IMR-90 (cell line): ENCODE measurements at regions of chr7 and their contacts with region 1.

Region 1: DNA sequence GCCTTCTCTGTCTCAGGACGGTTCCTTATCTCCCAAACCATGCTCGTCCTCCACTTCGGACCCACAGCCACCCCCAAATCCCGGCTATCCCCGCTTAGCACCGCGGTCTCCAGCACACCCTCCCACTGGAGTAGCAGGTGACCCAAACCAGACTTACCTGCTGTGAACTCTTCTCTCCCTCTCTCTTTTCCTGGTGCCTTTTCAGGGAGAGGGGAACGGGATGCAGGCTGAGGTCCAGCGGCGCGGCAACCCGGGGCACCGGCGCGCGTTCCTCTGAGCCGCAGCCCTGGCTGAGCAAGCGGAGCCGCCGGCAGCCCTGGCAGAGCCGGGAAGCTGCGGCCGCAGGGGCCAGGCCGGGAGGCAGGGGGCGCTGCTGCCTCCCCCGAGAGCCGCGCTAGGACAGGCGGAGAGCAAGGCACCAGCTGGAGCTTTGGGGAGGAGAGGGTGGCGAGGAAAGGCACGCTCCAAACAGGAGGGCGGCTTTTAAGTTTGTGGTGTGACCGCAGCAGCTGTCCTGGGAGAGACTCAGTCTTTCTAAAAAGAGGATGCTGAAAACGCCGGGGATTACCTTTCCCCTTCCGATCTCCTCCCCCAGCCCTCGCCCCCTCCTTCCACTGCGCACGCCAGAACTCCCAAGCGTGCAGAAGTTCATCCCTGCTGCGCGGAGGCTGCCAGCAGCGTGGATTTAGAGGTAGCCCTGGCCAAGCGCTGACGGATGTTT is at the start of gene SEMA3D:
- DNase-seq: peak; percentile 82
- ATAC-seq: peak; percentile 93
- H3K4me3 ChIP-seq: peak within 1 kb of the TSS; percentile 63
- H3K27ac ChIP-seq: peak within 1 kb of the TSS; percentile 3; the same call in 1 of the 2 replicates
- H3K4me1 ChIP-seq: peaks cover 1% of the 10 kb centered on the region; the same call in 1 of the 2 replicates
- H3K27me3 ChIP-seq: peaks cover 4% of the 10 kb centered on the region
- CTCF ChIP-seq: peak; percentile 95
- POLR2A ChIP-seq: no peak
- RAD21 ChIP-seq: peak; percentile 83
- total RNA-seq, gene SEMA3D: 10.8 and 13.6 TPM in 2 replicates

Region 2: GRCh38 chr7:83672157-83672556 is 1514.5 kb before region 1 on chr7:
- CTCF ChIA-PET with region 1: no interaction called
- POLR2A ChIA-PET with region 1: no interaction called
- dilution Hi-C with region 1: no loop called
- in situ Hi-C with region 1: no loop called
- intact Hi-C with region 1: no loop called
- DNase-seq: no peak
- ATAC-seq: no peak
- H3K4me3 ChIP-seq: no peak overlapping the region
- H3K27ac ChIP-seq: no peak overlapping the region
- H3K4me1 ChIP-seq: no peaks in the 10 kb centered on the region
- H3K27me3 ChIP-seq: no peaks in the 10 kb centered on the region
- CTCF ChIP-seq: no peak
- POLR2A ChIP-seq: no peak
- RAD21 ChIP-seq: no peak

Region 3: GRCh38 chr7:83936056-83936708 is 1250.5 kb before region 1 on chr7:
- CTCF ChIA-PET with region 1: no interaction called
- POLR2A ChIA-PET with region 1: no interaction called
- dilution Hi-C with region 1: no loop called
- in situ Hi-C with region 1: loop called (anchors 10 kb)
- intact Hi-C with region 1: no loop called
- DNase-seq: peak; percentile 81
- ATAC-seq: peak; percentile 95
- H3K4me3 ChIP-seq: no peak overlapping the region
- H3K27ac ChIP-seq: no peak overlapping the region
- H3K4me1 ChIP-seq: no peaks in the 10 kb centered on the region
- H3K27me3 ChIP-seq: no peaks in the 10 kb centered on the region
- CTCF ChIP-seq: peak; percentile 93
- POLR2A ChIP-seq: no peak
- RAD21 ChIP-seq: peak; percentile 95

Region 4: GRCh38 chr7:84042110-84042539 is 1144.6 kb before region 1 on chr7:
- CTCF ChIA-PET with region 1: no interaction called
- POLR2A ChIA-PET with region 1: no interaction called
- dilution Hi-C with region 1: no loop called
- in situ Hi-C with region 1: no loop called
- intact Hi-C with region 1: no loop called
- DNase-seq: peak; percentile 84
- ATAC-seq: peak; percentile 94
- H3K4me3 ChIP-seq: no peak overlapping the region
- H3K27ac ChIP-seq: peak overlapping the region; percentile 34; the same call in 1 of the 2 replicates
- H3K4me1 ChIP-seq: peaks cover 6% of the 10 kb centered on the region
- H3K27me3 ChIP-seq: no peaks in the 10 kb centered on the region
- CTCF ChIP-seq: no peak
- POLR2A ChIP-seq: no peak
- RAD21 ChIP-seq: no peak

Region 5: DNA sequence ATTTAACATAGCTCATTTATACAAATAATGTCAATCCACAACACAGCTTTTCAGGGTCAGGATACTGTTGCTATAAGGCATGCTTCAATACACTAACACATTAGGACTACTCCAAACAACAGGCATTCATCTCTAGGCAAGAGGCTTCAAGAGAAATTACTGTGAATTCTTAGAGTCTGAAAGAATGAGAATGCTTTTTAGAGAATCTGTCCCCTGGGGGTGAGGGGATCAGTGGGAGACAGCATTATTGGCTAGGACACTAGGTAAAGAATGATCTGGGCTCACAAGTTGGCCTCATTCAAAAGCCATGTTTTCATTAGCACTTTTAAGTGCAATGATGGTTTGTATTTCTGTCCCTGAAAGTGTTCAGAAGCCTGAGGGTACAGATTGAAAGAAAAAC is 132.4 kb before region 1 on chr7:
- CTCF ChIA-PET with region 1: no interaction called
- POLR2A ChIA-PET with region 1: no interaction called
- dilution Hi-C with region 1: no loop called
- in situ Hi-C with region 1: loop called (anchors 5 kb)
- intact Hi-C with region 1: no loop called
- DNase-seq: no peak
- ATAC-seq: no peak
- H3K4me3 ChIP-seq: no peak overlapping the region
- H3K27ac ChIP-seq: no peak overlapping the region
- H3K4me1 ChIP-seq: no peaks in the 10 kb centered on the region
- H3K27me3 ChIP-seq: no peaks in the 10 kb centered on the region
- CTCF ChIP-seq: no peak
- POLR2A ChIP-seq: no peak
- RAD21 ChIP-seq: no peak

Region 6: DNA sequence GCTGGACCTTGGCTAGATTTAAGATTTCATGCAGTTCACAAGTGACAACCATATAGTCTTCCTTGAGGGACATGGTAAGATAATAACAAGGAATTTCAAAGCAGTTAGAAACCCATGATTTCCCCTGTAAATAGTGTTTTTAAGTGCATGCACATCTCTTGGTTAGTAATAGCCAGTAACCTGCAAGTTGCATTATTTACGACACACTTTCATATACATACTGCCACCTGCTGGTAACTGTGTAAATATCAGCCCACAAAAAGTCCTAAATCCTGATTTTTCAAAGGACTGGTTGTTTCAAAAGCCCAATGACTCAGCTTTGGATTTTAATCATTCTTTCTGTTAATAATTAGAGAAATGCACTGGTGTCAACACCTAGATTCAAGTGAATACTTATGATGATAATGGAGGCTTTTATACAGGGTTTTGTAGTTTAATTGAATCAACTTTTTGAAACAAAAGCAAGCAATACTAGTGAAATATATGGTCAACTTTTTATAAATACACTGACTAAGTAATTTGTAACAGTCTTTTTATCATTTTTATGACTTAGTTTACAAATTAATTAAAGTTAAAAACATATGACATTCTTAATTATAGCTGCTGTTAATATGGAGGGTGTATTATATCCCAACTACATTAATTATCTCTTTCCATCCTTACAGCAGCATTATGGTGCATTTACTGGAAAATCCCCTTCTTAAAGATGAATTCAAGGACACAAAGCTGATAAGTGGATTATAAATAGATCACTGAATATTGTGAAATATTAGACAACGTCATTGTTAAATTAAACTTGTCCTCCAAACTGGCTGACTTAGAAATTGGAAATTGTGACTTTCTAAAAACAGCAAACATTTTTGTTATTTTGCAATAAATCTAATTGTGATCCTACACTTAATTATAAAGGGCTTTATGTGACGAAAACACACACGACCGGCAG is 367.8 kb after region 1 on chr7:
- CTCF ChIA-PET with region 1: interaction called, 7 read pairs
- POLR2A ChIA-PET with region 1: no interaction called
- dilution Hi-C with region 1: no loop called
- in situ Hi-C with region 1: loop called (anchors 10 kb)
- intact Hi-C with region 1: loop called (anchors 1 kb)
- DNase-seq: peak; percentile 82
- ATAC-seq: peak; percentile 84
- H3K4me3 ChIP-seq: no peak overlapping the region
- H3K27ac ChIP-seq: no peak overlapping the region
- H3K4me1 ChIP-seq: no peaks in the 10 kb centered on the region
- H3K27me3 ChIP-seq: no peaks in the 10 kb centered on the region
- CTCF ChIP-seq: peak; percentile 78
- POLR2A ChIP-seq: no peak
- RAD21 ChIP-seq: peak; percentile 82

Region 7: DNA sequence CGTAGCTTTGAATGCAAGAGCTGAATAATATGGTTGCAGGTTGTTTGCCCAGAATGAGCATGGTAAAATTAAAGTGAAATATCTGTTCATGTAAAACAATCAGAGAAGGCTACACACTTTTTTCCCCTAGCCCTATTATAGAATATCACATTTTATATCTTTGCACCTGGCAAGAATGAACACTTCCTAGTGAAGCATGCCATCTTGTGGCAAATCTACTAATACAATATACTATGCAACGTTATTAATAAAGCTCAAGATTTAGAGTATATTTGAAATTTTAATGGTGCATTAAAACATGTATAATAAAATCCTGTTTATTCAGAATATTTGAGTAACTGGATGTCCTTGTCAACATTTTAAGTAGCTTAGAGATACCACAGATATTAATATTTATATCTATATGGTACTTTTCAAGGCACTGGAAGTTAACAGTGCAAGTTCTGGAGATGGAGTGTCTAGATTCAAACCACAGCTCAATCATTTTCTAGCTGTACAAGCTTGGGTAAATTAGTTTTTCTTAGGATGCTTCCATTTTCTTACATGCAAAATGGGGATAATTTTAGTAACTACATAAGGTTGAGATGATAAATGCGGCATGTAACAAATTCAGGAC is 643.2 kb after region 1 on chr7:
- CTCF ChIA-PET with region 1: no interaction called
- POLR2A ChIA-PET with region 1: no interaction called
- dilution Hi-C with region 1: no loop called
- in situ Hi-C with region 1: no loop called
- intact Hi-C with region 1: loop called (anchors 1 kb)
- DNase-seq: peak; percentile 11
- ATAC-seq: 0 out of 2 replicates have a peak, but pooled peaks have one; percentile 57
- H3K4me3 ChIP-seq: no peak overlapping the region
- H3K27ac ChIP-seq: no peak overlapping the region
- H3K4me1 ChIP-seq: no peaks in the 10 kb centered on the region
- H3K27me3 ChIP-seq: no peaks in the 10 kb centered on the region
- CTCF ChIP-seq: peak; percentile 52
- POLR2A ChIP-seq: no peak
- RAD21 ChIP-seq: peak; percentile 62